HepG2 (cell line): ENCODE measurements at regions of chr5 and their contacts with region 1.

Region 1: GRCh38 chr5:170747851-170748250 is 35.7 kb upstream of the GABRP start:
- DNase-seq: peak; percentile 15
- ATAC-seq: peak; percentile 80
- H3K4me3 ChIP-seq: no peak overlapping the region
- H3K27ac ChIP-seq: no peak overlapping the region
- H3K4me1 ChIP-seq: no peaks in the 10 kb centered on the region
- H3K27me3 ChIP-seq: peaks cover 2 to 25% of the 10 kb centered on the region in 2 experiments; a peak in 3 of 5 replicates
- CTCF ChIP-seq: peak; percentile 49
- EP300 ChIP-seq: no peak
- POLR2A ChIP-seq: no peak
- RAD21 ChIP-seq: no peak

Region 2: DNA sequence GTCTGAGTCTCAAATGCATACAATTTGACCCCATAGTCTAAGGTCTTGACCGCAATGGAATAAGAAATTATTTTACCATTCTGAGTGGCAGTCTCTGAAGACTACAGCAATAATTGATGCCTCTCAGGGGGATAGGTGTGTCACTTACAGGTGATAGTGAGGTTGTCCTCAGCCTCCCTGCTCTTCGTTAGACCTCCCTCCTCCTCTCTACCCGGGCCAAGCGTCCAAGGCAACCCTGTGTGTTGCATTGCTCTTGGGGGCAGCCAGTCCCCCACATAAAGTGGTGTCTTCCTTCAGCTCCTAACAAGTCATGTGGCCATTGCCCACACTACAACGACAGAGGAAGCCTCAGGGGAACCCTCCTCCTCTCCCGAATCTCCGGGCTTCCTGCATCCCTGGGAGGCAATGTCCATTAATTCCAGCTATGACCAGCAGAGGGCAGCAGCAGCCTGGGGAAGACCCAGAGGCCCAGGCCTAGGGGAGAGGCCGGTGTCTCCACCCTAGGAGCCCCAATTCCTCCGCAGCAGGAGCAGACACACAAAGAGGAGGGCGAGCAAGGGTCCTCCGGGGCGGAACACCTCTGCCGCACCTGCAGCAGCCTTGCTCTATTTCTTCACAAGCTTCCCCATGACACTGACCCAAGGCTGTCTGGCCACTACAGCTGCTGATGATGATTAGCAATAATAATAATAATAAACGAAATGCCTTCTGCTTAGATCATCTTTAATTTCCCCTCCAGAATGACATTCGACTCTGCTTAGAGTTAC is 109.2 kb before region 1 on chr5:
- CTCF ChIA-PET with region 1: no interaction called
- POLR2A ChIA-PET with region 1: no interaction called
- in situ Hi-C with region 1: no loop called
- intact Hi-C with region 1: loop called (anchors 10 kb)
- DNase-seq: peak; percentile 15
- ATAC-seq: peak; percentile 91
- H3K4me3 ChIP-seq: no peak overlapping the region
- H3K27ac ChIP-seq: no peak overlapping the region
- H3K4me1 ChIP-seq: peaks cover 7% of the 10 kb centered on the region; the same call in 1 of the 2 replicates
- H3K27me3 ChIP-seq: peaks cover 2 to 24% of the 10 kb centered on the region in 2 experiments; a peak in 2 of 5 replicates
- CTCF ChIP-seq: peak; percentile 84
- EP300 ChIP-seq: no peak
- POLR2A ChIP-seq: no peak
- RAD21 ChIP-seq: no peak

Region 3: DNA sequence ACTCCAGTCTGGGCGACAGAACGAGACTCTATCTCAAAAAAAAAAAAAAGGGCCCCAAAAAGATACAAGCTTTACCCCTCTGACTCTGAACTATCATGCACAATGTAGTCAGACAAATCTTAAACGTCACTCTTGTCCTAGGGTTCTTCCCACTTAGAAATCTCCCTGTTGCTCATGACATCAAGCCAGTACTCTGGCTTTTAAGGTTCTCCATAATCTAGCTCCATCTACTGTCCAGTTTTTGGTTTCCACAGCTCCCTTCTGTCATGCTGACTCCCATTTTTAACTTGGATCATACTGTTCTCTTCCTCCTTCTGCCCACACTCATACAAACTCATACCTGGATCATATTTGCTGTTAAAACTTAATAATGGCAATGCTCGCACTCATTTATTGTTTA is 404.5 kb after region 1 on chr5:
- CTCF ChIA-PET with region 1: no interaction called
- POLR2A ChIA-PET with region 1: no interaction called
- in situ Hi-C with region 1: no loop called
- intact Hi-C with region 1: loop called (anchors 10 kb)
- DNase-seq: no peak
- ATAC-seq: peak; percentile 47; the same call in 2 of the 3 replicates
- H3K4me3 ChIP-seq: no peak overlapping the region
- H3K27ac ChIP-seq: no peak overlapping the region
- H3K4me1 ChIP-seq: no peaks in the 10 kb centered on the region
- H3K27me3 ChIP-seq: no peaks in the 10 kb centered on the region
- CTCF ChIP-seq: 0 out of 2 replicates have a peak, but pooled peaks have one; percentile 24
- EP300 ChIP-seq: no peak
- POLR2A ChIP-seq: no peak
- RAD21 ChIP-seq: no peak